ENCODE measurements at regions of chr3 and their contacts with region 1.

Region 1: GRCh38 chr3:126850370-126851085 is 132.4 kb upstream of the PLXNA1 start:
- DNase-seq: peak; percentile 87 to 93
- H3K4me3 ChIP-seq: no peak overlapping the region
- H3K4me3 Mint-ChIP-seq: peak overlapping the region; percentile 43
- H3K27ac Mint-ChIP-seq: peak overlapping the region; percentile 79
- H3K4me1 ChIP-seq: peaks cover 86% of the 10 kb centered on the region
- H3K4me1 Mint-ChIP-seq: peaks cover 72% of the 10 kb centered on the region
- H3K27me3 ChIP-seq: no peaks in the 10 kb centered on the region
- H3K27me3 Mint-ChIP-seq: no peaks in the 10 kb centered on the region
- CTCF ChIP-seq: no peak

Region 2: DNA sequence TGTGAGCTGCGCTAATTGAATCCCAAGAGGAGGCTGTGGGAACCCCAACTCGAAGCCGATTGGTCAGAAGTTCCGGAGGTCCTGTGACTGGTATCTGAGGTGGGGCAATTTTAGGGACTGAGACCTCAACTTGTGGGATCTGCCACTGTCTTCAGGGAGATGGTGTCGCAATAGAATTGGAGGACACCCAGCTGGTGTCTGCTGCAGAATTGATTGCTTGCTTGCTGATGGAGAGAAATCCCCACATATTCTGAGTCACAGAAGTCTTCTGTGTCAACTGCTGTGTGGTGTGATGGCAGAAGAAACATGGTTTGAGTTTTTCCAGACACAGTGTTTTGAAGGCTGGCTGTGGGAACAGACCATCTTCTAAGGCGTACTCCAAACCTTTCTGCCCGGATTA is 32.7 kb after region 1 on chr3:
- CTCF ChIA-PET with region 1: interaction called, 6 read pairs
- POLR2A ChIA-PET with region 1: no interaction called
- intact Hi-C with region 1: loop called (anchors 2 kb)
- DNase-seq: no peak
- H3K4me3 ChIP-seq: no peak overlapping the region
- H3K4me3 Mint-ChIP-seq: no peak overlapping the region
- H3K27ac Mint-ChIP-seq: peak overlapping the region; percentile 91
- H3K4me1 ChIP-seq: peaks cover 58% of the 10 kb centered on the region
- H3K4me1 Mint-ChIP-seq: peaks cover 48% of the 10 kb centered on the region
- H3K27me3 ChIP-seq: no peaks in the 10 kb centered on the region
- H3K27me3 Mint-ChIP-seq: no peaks in the 10 kb centered on the region
- CTCF ChIP-seq: no peak

Region 3: GRCh38 chr3:126932188-126932968 is 81.8 kb after region 1 on chr3:
- CTCF ChIA-PET with region 1: interaction called, 6 read pairs
- POLR2A ChIA-PET with region 1: no interaction called
- intact Hi-C with region 1: loop called (anchors 1 kb)
- DNase-seq: no peak
- H3K4me3 ChIP-seq: no peak overlapping the region
- H3K4me3 Mint-ChIP-seq: no peak overlapping the region
- H3K27ac Mint-ChIP-seq: no peak overlapping the region
- H3K4me1 ChIP-seq: peaks cover 35% of the 10 kb centered on the region
- H3K4me1 Mint-ChIP-seq: peaks cover 43% of the 10 kb centered on the region
- H3K27me3 ChIP-seq: no peaks in the 10 kb centered on the region
- H3K27me3 Mint-ChIP-seq: no peaks in the 10 kb centered on the region
- CTCF ChIP-seq: no peak

Region 4: DNA sequence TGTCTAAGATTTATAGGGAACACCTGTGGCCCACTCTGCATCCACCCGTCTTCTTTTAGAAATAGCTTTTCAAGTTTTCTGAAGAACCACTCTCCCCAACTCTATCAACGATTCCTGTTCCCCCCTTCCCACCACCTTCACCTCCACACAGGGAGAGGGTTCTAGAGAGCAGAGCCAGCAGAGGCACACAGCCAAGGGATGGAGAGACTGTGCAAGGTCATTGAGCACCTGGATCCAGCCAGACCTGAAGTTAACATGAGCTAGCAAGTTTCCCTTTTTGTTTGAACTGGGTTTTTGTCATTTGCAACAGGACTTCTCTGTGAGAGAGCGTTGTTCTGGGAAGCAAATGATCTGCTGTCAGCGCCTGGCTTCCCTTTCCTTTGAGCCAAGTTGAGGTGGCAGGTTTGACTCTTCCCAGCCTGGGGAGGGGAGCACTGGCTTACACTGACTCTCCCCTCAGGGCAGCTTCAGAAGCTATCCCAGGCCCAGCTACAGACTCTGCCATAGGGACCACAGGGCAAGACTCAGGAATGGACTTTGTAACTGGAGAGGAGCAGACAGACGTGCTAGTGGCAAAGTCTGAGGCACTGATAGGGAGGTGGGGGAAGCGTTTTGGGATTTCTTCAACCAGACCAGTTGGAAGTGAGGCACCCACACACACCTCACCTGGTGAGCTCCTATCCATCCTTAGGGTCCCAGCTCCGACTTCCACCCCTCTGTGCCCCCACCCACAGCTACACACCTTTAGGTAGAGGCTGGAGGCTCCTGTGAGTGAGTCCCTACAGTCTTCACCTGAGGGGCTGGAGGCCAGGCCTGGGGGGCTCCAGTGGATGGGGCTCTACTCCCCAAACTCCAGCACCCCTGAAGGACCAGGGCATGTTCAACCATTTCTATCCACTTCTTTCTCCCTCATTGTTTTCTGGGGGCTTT is 113.0 kb after region 1 on chr3:
- CTCF ChIA-PET with region 1: interaction called, 5 read pairs
- POLR2A ChIA-PET with region 1: no interaction called
- intact Hi-C with region 1: loop called (anchors 1 kb)
- DNase-seq: no peak
- H3K4me3 ChIP-seq: no peak overlapping the region
- H3K4me3 Mint-ChIP-seq: no peak overlapping the region
- H3K27ac Mint-ChIP-seq: no peak overlapping the region
- H3K4me1 ChIP-seq: peaks cover 6% of the 10 kb centered on the region; the same call in 1 of the 2 replicates
- H3K4me1 Mint-ChIP-seq: peaks cover 14% of the 10 kb centered on the region
- H3K27me3 ChIP-seq: no peaks in the 10 kb centered on the region
- H3K27me3 Mint-ChIP-seq: no peaks in the 10 kb centered on the region
- CTCF ChIP-seq: no peak

Region 5: GRCh38 chr3:126982471-126983175 is 132.1 kb after region 1 on chr3 and contains the start of gene PLXNA1:
- CTCF ChIA-PET with region 1: interaction called, 10 read pairs
- POLR2A ChIA-PET with region 1: no interaction called
- intact Hi-C with region 1: loop called (anchors 5 kb)
- DNase-seq: peak; percentile 65 to 86
- H3K4me3 ChIP-seq: peak within 1 kb of the TSS; percentile 88
- H3K4me3 Mint-ChIP-seq: peak within 1 kb of the TSS; percentile 68
- H3K27ac Mint-ChIP-seq: no peak within 1 kb of the TSS
- H3K4me1 ChIP-seq: peaks cover 16% of the 10 kb centered on the region; the same call in 1 of the 2 replicates
- H3K4me1 Mint-ChIP-seq: peaks cover 7% of the 10 kb centered on the region
- H3K27me3 ChIP-seq: no peaks in the 10 kb centered on the region
- H3K27me3 Mint-ChIP-seq: no peaks in the 10 kb centered on the region
- CTCF ChIP-seq: peak; percentile 92 to 93
- total RNA-seq, gene PLXNA1: 92.4 and 95.1 TPM in 2 replicates

Measured in Caco-2 (cell line).